ENCODE measurements at regions of chr1 and their contacts with region 1.

Region 1: DNA sequence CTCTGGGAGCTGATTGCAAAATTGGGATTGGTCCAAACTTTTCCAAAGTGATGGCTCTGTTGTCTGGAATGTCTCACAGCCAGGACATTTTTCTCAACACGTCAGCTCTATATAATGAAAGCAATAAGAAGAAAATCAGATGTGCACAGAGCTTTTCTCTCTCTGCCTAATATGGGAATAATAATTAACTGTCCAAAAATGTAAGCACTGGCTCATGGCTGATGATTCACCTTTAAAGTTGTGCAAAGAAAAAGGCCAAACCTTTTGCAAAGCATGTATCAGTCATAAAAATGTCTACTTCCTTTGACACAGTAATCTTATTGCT is 30.4 kb downstream of the ZNF281 start:
- DNase-seq: peak; percentile 97
- H3K4me3 Mint-ChIP-seq: peak overlapping the region; percentile 61
- H3K27ac Mint-ChIP-seq: peak overlapping the region; percentile 71
- H3K4me1 Mint-ChIP-seq: peaks cover 56% of the 10 kb centered on the region
- H3K27me3 Mint-ChIP-seq: no peaks in the 10 kb centered on the region
- CTCF ChIP-seq: no peak

Region 2: DNA sequence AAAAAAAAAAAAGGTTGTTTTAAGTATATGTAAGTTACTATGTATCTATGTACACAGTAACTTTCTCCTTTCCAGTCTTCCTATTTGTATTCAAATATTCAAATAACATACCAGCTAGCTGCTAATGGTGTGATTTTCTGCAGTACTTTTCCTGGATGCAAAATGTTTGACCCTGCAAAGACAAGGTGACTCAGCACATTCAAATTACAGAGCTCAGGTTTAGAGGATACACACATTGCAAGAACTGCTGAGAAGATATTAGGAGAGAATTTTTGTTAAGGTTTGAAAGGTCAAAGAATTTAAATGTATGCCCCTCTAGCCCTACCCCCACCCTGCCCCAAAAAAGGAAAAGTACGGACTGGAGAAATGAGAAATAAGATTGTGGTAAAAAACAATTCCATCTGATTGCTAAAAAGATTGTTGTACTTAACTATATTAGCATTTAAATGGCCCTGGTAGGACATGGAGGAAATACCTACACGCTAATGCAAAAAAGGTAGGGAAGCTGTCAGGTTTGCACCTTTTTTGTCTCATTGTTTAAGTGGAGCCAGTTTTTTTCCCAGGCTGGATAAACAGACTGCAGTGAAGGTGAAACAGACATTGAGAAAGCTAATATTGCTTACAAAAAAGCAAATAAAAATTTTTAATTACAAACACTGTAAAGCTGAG is 15.2 kb before region 1 on chr1:
- CTCF ChIA-PET with region 1: interaction called, 4 read pairs
- POLR2A ChIA-PET with region 1: interaction called, 21 read pairs
- intact Hi-C with region 1: no loop called
- DNase-seq: peak; percentile 50
- H3K4me3 Mint-ChIP-seq: no peak overlapping the region
- H3K27ac Mint-ChIP-seq: no peak overlapping the region
- H3K4me1 Mint-ChIP-seq: peaks cover 26% of the 10 kb centered on the region
- H3K27me3 Mint-ChIP-seq: no peaks in the 10 kb centered on the region
- CTCF ChIP-seq: no peak

Region 3: GRCh38 chr1:200409761-200410565 is 30.6 kb after region 1 on chr1 and contains the start of gene ZNF281:
- CTCF ChIA-PET with region 1: interaction called, 9 read pairs
- POLR2A ChIA-PET with region 1: interaction called, 53 read pairs
- intact Hi-C with region 1: loop called (anchors 5 kb)
- DNase-seq: peak; percentile 97
- H3K4me3 Mint-ChIP-seq: peak within 1 kb of the TSS; percentile 94
- H3K27ac Mint-ChIP-seq: peak within 1 kb of the TSS; percentile 93
- H3K4me1 Mint-ChIP-seq: peaks cover 60% of the 10 kb centered on the region
- H3K27me3 Mint-ChIP-seq: no peaks in the 10 kb centered on the region
- CTCF ChIP-seq: no peak
- total RNA-seq, gene ZNF281: 22.3 and 24.8 TPM in 2 replicates

Region 4: DNA sequence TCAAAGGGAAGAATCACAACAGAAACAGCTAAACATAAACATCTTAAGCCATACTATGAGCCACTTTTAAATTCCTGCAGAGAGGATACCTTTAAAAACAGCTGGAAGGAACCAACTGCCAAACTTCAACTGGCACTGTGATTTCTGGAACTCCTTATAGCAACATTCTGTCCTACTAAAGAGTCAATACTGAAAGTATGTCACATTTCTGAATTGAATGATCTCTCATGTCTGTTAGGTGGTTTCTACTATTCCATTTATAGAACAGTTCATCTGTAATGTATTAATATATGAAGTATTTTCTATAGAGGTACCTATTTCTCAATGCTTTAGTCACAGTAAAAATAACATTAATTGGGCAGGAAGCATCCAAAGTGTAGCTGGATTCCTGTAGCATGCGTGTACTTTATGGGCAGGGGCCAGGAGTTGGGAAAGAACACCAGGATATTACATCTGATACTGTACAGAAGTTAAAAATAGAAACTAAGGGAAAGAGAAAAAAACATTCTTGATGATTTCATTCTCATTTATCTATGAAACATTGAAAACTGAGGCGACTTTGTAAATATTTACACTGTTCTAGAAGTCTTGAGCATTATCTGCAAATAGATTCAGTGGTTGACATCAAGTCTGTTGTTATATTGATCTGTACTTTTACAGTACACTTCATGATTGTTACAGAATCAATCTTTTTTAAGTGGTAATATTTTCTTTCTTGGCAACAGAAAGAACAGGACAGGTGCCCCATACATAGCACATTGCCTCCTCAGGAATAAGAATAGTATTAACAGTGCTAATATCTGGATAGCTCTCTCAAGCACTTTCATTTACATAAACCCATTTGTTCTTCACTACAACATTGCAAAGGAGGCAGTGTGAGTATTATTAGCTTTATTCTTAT is 36.5 kb after region 1 on chr1:
- CTCF ChIA-PET with region 1: interaction called, 4 read pairs
- POLR2A ChIA-PET with region 1: interaction called, 29 read pairs
- intact Hi-C with region 1: loop called (anchors 5 kb)
- DNase-seq: peak; percentile 99
- H3K4me3 Mint-ChIP-seq: peak overlapping the region; percentile 20
- H3K27ac Mint-ChIP-seq: peak overlapping the region; percentile 93
- H3K4me1 Mint-ChIP-seq: peaks cover 24% of the 10 kb centered on the region
- H3K27me3 Mint-ChIP-seq: no peaks in the 10 kb centered on the region
- CTCF ChIP-seq: no peak

Region 5: DNA sequence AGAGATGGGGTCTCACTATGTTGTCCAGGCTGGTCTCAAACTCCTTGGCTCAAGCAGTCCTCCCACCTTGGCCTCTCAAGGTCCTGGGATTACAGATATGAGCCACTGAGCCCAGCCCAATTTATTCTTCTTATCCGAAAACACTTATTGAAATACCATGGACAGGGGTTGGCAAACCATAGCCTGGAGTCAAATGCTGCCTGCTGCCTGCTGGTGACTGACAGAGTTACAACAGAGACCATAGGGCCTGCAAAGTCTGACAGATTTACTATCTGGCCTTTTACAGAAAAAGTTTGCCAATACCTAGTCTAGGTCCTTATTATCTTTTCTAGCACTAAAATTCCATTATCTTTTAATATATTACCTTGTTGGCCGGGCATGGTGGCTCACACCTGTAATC is 117.5 kb after region 1 on chr1:
- CTCF ChIA-PET with region 1: no interaction called
- POLR2A ChIA-PET with region 1: no interaction called
- intact Hi-C with region 1: no loop called
- DNase-seq: no peak
- H3K4me3 Mint-ChIP-seq: no peak overlapping the region
- H3K27ac Mint-ChIP-seq: no peak overlapping the region
- H3K4me1 Mint-ChIP-seq: no peaks in the 10 kb centered on the region
- H3K27me3 Mint-ChIP-seq: no peaks in the 10 kb centered on the region
- CTCF ChIP-seq: no peak